Cardiac septum (tissue), 1 donor: ENCODE measurements at regions of chr10 and their contacts with region 1.

Region 1: GRCh38 chr10:52309994-52310393 is 4.1 kb upstream of the DKK1 start:
- DNase-seq: no peak

Region 2: GRCh38 chr10:52100011-52100547 is 209.9 kb before region 1 on chr10:
- intact Hi-C with region 1: no loop called
- DNase-seq: no peak

Region 3: GRCh38 chr10:52488606-52489485 is 178.9 kb after region 1 on chr10:
- intact Hi-C with region 1: loop called (anchors 2 kb)
- DNase-seq: no peak